ENCODE measurements at regions of chr17 and their contacts with region 1.

Region 1: GRCh38 chr17:40113110-40113906 is 8.5 kb upstream of the MSL1 start:
- DNase-seq: peak; percentile 89
- ATAC-seq: peak; percentile 72

Region 2: DNA sequence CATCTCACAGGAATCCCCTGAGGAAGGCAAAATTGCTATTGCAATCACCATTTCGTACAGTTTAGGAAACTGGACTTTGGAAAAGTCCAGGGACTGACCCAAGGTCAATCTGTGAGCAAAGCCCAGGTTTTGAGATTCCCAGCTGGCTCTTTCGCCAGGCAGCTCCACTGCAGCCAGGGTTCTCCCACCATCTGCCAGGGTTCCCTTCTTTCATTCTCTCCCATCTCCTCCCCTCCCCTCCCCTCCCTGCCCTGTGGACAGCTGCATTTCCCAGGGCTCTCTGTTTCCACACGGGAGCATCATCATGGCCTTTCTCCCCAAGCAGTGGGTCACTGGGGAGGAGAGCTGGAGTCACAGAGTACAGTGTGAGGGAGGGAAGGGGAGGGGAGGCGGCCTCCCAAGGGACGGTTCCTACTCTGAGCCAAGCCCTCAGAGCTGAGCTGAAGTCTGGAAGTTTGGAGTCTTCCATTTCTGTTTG is 162.4 kb before region 1 on chr17:
- intact Hi-C with region 1: no loop called
- DNase-seq: peak; percentile 64
- ATAC-seq: no peak

Region 3: GRCh38 chr17:40062329-40063186 is 50.8 kb before region 1 on chr17 and contains the start of gene THRA:
- intact Hi-C with region 1: loop called (anchors 5 kb)
- DNase-seq: peak; percentile 91
- ATAC-seq: peak; percentile 79
- total RNA-seq, gene THRA: 98.1 TPM

Region 4: GRCh38 chr17:40177275-40177874 is 64.1 kb after region 1 on chr17 and contains the start of gene RAPGEFL1:
- intact Hi-C with region 1: no loop called
- DNase-seq: peak; percentile 87
- ATAC-seq: peak; percentile 89
- total RNA-seq, gene RAPGEFL1: 3.8 TPM

Measured in left ventricle myocardium superior (tissue), 1 donor.